Psoas muscle (tissue), 8 donors: ENCODE measurements at regions of chr2 and their contacts with region 1.

Region 1: DNA sequence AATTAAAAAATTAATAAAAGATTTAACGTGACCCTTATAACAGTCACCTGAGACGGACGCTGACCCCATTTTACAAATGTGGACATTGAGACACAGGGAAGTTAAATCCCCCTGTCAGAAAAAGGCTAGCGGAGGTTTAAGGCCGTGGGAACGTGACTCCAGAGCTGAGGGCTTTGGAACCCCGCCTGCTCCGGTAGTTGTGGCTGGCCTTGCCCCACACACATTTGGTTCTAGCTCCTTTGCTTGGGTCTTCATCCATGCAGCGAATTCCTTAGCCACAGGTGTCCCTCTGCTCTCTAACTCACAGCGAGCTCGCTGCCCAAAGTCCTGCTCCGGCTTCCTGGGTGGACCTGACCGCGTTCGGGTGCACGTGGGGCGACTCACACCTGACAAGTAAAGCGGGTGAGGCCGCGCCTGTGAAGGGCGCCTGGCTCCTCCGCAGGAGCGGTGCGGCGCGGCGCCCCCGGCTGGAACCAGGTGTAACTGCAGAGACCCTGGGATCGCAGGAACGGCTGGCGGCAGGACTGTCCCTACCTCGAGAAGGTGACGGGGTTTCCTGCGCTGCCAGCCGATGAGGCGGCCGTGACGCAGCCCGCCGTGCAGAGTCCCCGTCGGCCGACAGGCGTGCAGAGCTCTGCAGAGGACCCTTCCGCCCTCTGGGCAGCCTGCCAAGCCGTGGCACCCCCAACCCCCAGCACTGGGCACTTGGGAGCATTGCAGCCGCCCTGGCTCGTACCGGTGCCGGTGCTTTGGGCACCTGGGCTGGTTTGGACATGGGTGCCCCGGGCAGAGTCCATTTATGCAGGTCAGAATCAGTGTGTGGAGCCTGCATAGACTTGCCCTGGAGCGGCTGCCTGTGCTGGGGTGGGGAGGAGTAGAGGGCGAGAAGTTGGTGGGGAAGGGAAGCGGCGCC is 2.4 kb upstream of the PROC start:
- DNase-seq: peak; percentile 41 to 82
- ATAC-seq: peak; percentile 40 to 67 (median 64)
- H3K4me3 ChIP-seq: peak overlapping the region; percentile 68
- H3K27ac ChIP-seq: peak overlapping the region; percentile 54
- H3K4me1 ChIP-seq: peaks cover 25% of the 10 kb centered on the region
- H3K27me3 ChIP-seq: no peaks in the 10 kb centered on the region
- CTCF ChIP-seq: peak; percentile 66

Region 2: GRCh38 chr2:127208313-127208712 is 207.5 kb before region 1 on chr2:
- intact Hi-C with region 1: no loop called
- DNase-seq: no peak
- ATAC-seq: peak in 2 of 4 donors; percentile 36 to 43
- H3K4me3 ChIP-seq: no peak overlapping the region
- H3K27ac ChIP-seq: no peak overlapping the region
- H3K4me1 ChIP-seq: no peaks in the 10 kb centered on the region
- H3K27me3 ChIP-seq: no peaks in the 10 kb centered on the region
- CTCF ChIP-seq: no peak

Region 3: DNA sequence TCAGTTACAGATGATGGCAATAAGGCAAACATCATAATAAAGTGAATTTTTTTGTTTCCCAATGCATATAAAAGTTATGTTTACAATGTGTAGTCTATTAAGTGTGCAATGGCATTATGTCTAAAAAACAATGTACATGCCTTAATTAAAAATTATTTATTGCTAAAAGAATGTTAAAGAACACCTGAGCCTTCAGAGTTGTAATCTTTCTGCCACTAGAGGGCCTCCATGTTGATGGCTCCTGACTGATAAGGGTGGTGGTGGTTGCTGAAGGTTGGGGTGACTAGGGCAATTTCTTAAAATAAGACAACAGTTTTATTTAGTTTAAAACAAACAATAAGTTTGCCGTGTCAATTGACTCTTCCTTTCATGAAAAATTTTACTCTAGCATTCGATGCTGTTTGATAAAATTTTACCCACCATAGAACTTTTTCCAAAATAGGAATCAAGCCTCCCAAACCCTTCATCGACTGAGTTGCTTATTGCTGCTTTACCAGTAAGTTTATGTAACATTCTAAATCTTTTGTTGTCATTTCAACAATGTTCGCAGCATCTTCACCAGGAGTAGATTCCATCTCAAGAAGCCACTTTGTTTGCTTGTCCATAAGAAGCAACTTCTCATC is 60.4 kb before region 1 on chr2:
- intact Hi-C with region 1: loop called (anchors 5 kb)
- DNase-seq: no peak
- ATAC-seq: peak in 3 of 4 donors; percentile 47 to 70 (median 68)
- H3K4me3 ChIP-seq: no peak overlapping the region
- H3K27ac ChIP-seq: no peak overlapping the region
- H3K4me1 ChIP-seq: peaks cover 31% of the 10 kb centered on the region
- H3K27me3 ChIP-seq: no peaks in the 10 kb centered on the region
- CTCF ChIP-seq: peak; percentile 56

Region 4: DNA sequence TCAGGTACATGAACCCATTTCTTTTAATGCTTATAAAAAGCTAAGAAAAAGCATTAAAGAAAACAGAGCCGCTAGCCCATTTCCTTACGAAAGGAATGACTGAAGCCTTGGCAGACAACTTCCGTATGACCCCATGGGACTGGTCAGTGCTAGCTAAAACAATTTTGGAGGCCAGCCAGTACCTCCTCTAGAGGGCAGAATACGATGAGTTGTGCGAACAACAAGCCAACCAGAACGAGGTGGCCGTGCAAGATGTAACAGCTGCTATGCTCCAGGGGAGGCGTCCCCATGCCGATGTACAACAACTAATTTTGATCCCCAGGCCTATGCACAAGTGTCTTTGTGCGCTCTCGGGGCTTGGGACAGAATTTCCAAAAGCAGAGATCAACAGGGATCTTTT is 44.8 kb before region 1 on chr2:
- intact Hi-C with region 1: loop called in 1 of 2 experiments (anchors 5 kb)
- DNase-seq: peak; percentile 65 to 82
- ATAC-seq: peak in 3 of 4 donors; percentile 88 to 92 (median 90)
- H3K4me3 ChIP-seq: no peak overlapping the region
- H3K27ac ChIP-seq: peak overlapping the region; percentile 50
- H3K4me1 ChIP-seq: peaks cover 40% of the 10 kb centered on the region
- H3K27me3 ChIP-seq: no peaks in the 10 kb centered on the region
- CTCF ChIP-seq: no peak

Region 5: DNA sequence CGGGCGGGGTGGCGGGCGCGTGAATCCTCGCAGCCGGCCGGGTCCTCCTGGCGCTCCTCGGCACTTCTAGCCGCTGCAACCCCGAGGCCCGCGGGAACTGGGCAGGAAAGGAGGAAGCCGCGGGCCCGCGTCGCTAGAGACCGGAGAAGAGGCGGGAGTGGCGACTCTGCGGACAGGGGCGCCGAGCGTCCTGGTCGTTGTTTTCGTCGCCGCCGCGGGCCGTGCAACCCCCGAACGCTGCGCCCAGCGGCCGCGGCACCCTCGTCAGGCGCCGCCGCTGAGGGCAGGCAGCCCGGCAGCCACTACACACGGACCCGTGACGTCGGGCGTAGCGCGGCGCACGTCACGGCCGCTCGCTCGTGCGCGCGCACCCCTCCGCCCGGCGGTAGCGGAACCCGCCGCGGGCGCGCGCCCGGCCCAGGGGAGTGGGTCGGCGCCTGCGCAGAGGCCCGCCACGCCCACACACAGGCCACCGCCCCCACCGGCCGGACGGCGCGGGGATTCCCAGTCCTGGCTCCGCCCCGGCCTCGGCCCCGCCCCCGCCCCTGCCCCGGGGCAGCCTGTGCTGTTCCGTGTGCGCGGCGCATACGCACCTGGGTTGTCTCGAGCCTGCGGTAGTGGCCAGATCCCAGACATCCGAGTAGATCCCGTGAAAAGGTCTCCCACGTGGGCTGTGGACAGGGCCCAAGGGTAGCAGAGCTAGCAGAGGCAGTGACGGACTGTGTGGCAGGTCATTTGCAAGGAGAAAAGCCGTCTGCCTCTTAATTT is 28.0 kb before region 1 on chr2 and contains the start of gene MAP3K2:
- intact Hi-C with region 1: no loop called
- DNase-seq: peak; percentile 95 to 96
- ATAC-seq: peak; percentile 89 to 94 (median 90)
- H3K4me3 ChIP-seq: peak within 1 kb of the TSS; percentile 100
- H3K27ac ChIP-seq: peak within 1 kb of the TSS; percentile 100
- H3K4me1 ChIP-seq: peaks cover 55% of the 10 kb centered on the region
- H3K27me3 ChIP-seq: no peaks in the 10 kb centered on the region
- CTCF ChIP-seq: no peak
- total RNA-seq, gene MAP3K2: 25.9 to 37.1 (median 30.9) TPM